ENCODE measurements at regions of chr3 and their contacts with region 1.

Region 1: GRCh38 chr3:64685800-64686445 is 1.9 kb downstream of the ADAMTS9 start:
- DNase-seq: peak; percentile 81 to 94
- H3K4me3 ChIP-seq: peak overlapping the region; percentile 90
- H3K27ac ChIP-seq: peak overlapping the region; percentile 90
- H3K4me1 ChIP-seq: peaks cover 13% of the 10 kb centered on the region; the same call in 1 of the 2 replicates
- H3K27me3 ChIP-seq: no peaks in the 10 kb centered on the region
- CTCF ChIP-seq: no peak

Region 2: DNA sequence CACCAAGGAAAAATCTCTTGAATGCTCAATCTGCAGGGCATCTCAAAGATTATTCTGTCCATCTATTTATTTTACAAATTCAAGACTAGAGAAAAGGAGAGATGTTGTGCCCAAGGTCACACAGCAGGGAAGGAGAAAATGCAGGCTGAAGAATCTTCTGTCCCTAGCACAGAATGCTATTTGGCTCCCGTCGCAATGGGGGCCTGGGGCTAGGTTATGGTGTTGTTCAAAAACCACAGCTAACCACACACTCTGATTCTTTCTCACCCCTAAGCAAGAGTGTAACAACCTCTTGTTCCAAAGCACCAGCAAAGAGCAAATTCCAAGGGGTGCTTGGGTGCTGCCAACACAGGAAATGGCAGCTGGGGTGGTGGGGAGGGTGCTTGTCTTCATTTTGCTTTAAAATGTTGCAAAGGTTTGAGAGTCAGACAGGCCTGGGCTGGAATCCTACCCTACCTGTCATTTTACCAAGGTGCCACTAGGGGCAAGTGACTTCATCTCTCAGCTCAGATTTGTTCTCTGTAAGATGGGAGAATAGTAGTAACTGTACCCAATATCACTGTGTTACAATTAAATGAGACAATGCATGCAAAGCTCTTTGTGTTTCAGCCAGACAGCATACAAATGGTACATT is 110.6 kb before region 1 on chr3:
- CTCF ChIA-PET with region 1: no interaction called
- POLR2A ChIA-PET with region 1: no interaction called
- intact Hi-C with region 1: no loop called
- DNase-seq: no peak
- H3K4me3 ChIP-seq: no peak overlapping the region
- H3K27ac ChIP-seq: no peak overlapping the region
- H3K4me1 ChIP-seq: no peaks in the 10 kb centered on the region
- H3K27me3 ChIP-seq: no peaks in the 10 kb centered on the region
- CTCF ChIP-seq: peak; percentile 74

Region 3: DNA sequence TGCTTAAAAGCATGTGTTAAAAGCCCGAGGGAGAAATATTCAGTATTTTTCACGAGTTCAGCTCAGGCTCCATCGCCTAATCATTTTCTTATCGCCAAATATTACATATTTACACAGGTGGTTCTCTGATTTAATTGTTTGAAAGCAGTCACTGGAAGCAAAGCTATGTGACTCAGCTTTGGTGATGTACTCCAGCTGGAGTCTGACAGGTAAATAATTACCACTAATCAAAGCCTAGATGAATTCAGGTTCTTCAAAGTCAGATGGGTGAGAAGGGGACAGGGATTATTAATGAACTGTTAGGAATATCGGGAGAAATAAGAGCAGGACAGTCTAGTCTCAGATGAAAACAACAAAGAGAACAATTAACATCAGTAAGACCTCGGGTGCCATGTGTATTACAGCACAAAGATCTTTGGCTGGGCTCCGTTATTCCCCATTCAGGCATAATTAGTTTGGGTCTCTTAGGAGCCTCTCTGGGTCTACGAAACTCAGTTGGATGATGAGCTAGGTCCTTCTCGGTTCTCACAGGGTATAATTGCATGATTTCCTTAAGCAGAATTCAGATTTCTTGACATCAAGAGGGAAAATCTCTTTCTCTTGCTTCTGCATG is 333.6 kb after region 1 on chr3:
- CTCF ChIA-PET with region 1: no interaction called
- POLR2A ChIA-PET with region 1: no interaction called
- intact Hi-C with region 1: loop called (anchors 5 kb)
- DNase-seq: peak in 1 of 2 experiments; percentile 76
- H3K4me3 ChIP-seq: peak overlapping the region; percentile 24; the same call in 1 of the 2 replicates
- H3K27ac ChIP-seq: peak overlapping the region; percentile 69
- H3K4me1 ChIP-seq: peaks cover 23% of the 10 kb centered on the region
- H3K27me3 ChIP-seq: no peaks in the 10 kb centered on the region
- CTCF ChIP-seq: no peak

Region 4: GRCh38 chr3:65146179-65146578 is 460.3 kb after region 1 on chr3:
- CTCF ChIA-PET with region 1: no interaction called
- POLR2A ChIA-PET with region 1: no interaction called
- intact Hi-C with region 1: loop called (anchors 5 kb)
- DNase-seq: peak; percentile 71 to 96
- H3K4me3 ChIP-seq: peak overlapping the region; percentile 33; the same call in 1 of the 2 replicates
- H3K27ac ChIP-seq: peak overlapping the region; percentile 98
- H3K4me1 ChIP-seq: peaks cover 18% of the 10 kb centered on the region
- H3K27me3 ChIP-seq: no peaks in the 10 kb centered on the region
- CTCF ChIP-seq: no peak

Region 5: GRCh38 chr3:65245133-65246063 is 559.5 kb after region 1 on chr3:
- CTCF ChIA-PET with region 1: no interaction called
- POLR2A ChIA-PET with region 1: no interaction called
- intact Hi-C with region 1: loop called (anchors 2 kb)
- DNase-seq: no peak
- H3K4me3 ChIP-seq: no peak overlapping the region
- H3K27ac ChIP-seq: no peak overlapping the region
- H3K4me1 ChIP-seq: no peaks in the 10 kb centered on the region
- H3K27me3 ChIP-seq: no peaks in the 10 kb centered on the region
- CTCF ChIP-seq: peak; percentile 50

Region 6: GRCh38 chr3:65439641-65440284 is 753.8 kb after region 1 on chr3:
- CTCF ChIA-PET with region 1: no interaction called
- POLR2A ChIA-PET with region 1: no interaction called
- intact Hi-C with region 1: loop called (anchors 1 kb)
- DNase-seq: peak; percentile 37 to 46
- H3K4me3 ChIP-seq: no peak overlapping the region
- H3K27ac ChIP-seq: no peak overlapping the region
- H3K4me1 ChIP-seq: no peaks in the 10 kb centered on the region
- H3K27me3 ChIP-seq: no peaks in the 10 kb centered on the region
- CTCF ChIP-seq: peak; percentile 59